ENCODE measurements at regions of chr14 and their contacts with region 1.

Region 1: GRCh38 chr14:75487155-75487671 is 35.1 kb upstream of the BATF start:
- DNase-seq: peak; percentile 35
- H3K4me3 Mint-ChIP-seq: no peak overlapping the region
- H3K27ac Mint-ChIP-seq: no peak overlapping the region
- H3K4me1 Mint-ChIP-seq: peaks cover 22% of the 10 kb centered on the region
- H3K27me3 Mint-ChIP-seq: peaks cover 3% of the 10 kb centered on the region

Region 2: DNA sequence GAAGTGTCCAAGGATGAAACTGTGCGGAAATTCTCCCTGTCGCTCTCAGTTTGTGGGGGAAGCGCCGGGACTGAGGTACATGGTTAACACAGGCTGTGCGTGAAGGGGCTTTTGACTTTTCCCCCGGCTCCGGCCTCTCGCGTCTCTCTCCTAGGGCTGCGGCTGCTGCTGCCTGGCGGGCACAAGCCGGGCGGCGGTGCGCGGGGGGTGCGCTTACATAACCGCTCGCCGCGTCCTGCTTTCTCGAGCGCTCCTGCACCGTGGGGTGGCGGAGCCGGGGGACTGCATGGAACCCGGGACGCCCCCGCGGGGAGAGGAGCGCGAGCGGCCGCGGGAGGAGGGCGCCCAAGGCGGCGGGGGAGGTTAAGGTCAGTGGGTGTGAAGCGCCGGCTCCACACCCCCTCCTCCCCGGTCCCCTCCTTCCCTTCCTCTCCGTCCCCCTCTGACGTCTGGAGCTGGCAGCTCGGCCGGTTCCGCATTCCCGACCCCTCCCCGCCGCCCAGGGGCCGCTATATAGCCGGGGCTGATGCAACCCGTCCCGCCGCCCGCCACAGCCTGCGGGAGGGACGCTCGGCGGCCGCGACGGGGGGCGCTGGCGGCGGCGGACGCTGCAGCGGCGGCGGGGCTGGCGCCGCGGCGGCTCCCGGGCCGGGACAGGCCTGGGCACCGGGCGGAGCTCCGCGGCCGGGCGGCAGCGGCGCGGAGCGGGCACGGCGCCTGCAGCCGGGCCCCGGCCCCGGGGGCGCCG is 59.6 kb before region 1 on chr14 and contains the start of gene JDP2:
- CTCF ChIA-PET with region 1: interaction called, 6 read pairs
- intact Hi-C with region 1: loop called (anchors 5 kb)
- DNase-seq: peak; percentile 53
- H3K4me3 Mint-ChIP-seq: peak within 1 kb of the TSS; percentile 73
- H3K27ac Mint-ChIP-seq: no peak within 1 kb of the TSS
- H3K4me1 Mint-ChIP-seq: peaks cover 17% of the 10 kb centered on the region
- H3K27me3 Mint-ChIP-seq: peaks cover 15% of the 10 kb centered on the region
- total RNA-seq, gene JDP2: 2.8 to 3.2 TPM

Region 3: GRCh38 chr14:75452900-75453747 is 34.1 kb before region 1 on chr14:
- CTCF ChIA-PET with region 1: interaction called, 10 read pairs
- intact Hi-C with region 1: no loop called
- DNase-seq: no peak
- H3K4me3 Mint-ChIP-seq: no peak overlapping the region
- H3K27ac Mint-ChIP-seq: no peak overlapping the region
- H3K4me1 Mint-ChIP-seq: peaks cover 2% of the 10 kb centered on the region
- H3K27me3 Mint-ChIP-seq: no peaks in the 10 kb centered on the region

Region 4: DNA sequence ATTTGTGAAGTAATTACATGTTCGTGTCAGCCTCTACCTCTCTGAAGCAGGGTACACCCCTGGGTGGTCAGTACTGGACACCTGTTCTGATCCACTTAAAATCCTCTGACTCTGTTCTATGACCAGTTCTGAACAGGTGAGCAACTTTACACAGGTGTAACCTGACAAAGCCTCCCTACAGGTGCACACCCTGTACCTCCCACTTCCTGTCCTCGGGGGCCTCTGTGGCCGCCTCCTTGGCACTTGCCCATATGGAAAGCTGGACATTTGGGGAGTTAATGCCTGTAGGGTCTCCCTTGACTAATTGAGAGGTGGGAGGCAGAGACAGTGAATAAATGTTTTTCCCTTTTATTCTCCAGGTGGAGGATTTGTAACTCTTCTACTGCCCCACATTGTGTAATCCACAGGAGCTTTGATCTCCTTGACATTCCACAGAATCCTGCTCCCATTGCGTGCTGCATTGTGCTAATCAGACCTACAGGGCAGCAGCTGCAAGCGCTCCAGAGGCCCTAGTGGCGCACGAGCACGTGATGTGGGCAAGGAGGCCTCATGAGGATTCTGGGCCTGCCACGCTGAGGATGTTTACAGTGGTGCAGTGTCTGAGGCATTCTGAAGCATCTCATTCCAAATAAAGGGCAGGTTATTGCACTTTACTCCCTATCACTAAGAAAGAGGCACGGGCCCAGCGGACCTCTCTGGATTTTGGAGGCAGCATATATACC is 10.8 kb before region 1 on chr14:
- CTCF ChIA-PET with region 1: interaction called, 12 read pairs
- intact Hi-C with region 1: no loop called
- DNase-seq: no peak
- H3K4me3 Mint-ChIP-seq: no peak overlapping the region
- H3K27ac Mint-ChIP-seq: no peak overlapping the region
- H3K4me1 Mint-ChIP-seq: no peaks in the 10 kb centered on the region
- H3K27me3 Mint-ChIP-seq: peaks cover 3% of the 10 kb centered on the region

Region 5: GRCh38 chr14:75522224-75522982 is 35.2 kb after region 1 on chr14 and contains the start of gene BATF:
- CTCF ChIA-PET with region 1: interaction called, 27 read pairs
- intact Hi-C with region 1: no loop called
- DNase-seq: peak; percentile 91
- H3K4me3 Mint-ChIP-seq: peak within 1 kb of the TSS; percentile 99
- H3K27ac Mint-ChIP-seq: peak within 1 kb of the TSS; percentile 100
- H3K4me1 Mint-ChIP-seq: peaks cover 61% of the 10 kb centered on the region
- H3K27me3 Mint-ChIP-seq: no peaks in the 10 kb centered on the region
- total RNA-seq, gene BATF: 178 to 179 TPM

Region 6: GRCh38 chr14:75542588-75543091 is 55.4 kb after region 1 on chr14:
- CTCF ChIA-PET with region 1: interaction called, 13 read pairs
- intact Hi-C with region 1: no loop called
- DNase-seq: peak; percentile 97
- H3K4me3 Mint-ChIP-seq: peak overlapping the region; percentile 65
- H3K27ac Mint-ChIP-seq: peak overlapping the region; percentile 99
- H3K4me1 Mint-ChIP-seq: peaks cover 84% of the 10 kb centered on the region
- H3K27me3 Mint-ChIP-seq: no peaks in the 10 kb centered on the region

Region 7: DNA sequence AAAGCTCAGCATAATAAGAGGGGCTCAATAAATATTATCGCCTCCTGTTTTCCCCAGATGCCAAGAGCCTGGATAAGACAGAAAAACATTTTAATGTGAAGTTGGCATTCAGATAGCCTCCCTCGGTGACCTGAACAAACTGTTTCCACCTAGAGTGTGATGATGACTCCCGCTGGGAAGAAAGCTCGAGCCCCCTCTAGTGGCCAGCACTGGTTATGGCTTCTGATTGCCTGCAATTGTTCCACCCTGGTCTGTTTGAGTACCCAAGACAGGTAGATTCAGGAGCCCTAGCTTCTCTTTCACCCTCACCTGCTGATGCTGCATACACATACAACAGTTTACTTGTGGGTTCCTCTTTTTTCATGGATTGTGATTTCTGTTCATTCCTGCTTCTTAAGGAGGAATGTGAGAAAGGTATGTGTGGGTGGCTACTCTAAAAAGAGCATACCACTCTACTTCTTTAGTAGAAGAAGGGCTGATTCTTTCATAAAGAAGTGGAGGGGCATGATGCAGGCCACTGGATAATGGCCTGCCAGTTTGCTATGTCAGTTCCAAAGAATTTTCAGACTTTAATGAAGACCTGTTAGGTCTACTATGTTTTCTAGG is 167.0 kb after region 1 on chr14:
- CTCF ChIA-PET with region 1: interaction called, 17 read pairs
- intact Hi-C with region 1: no loop called
- DNase-seq: peak; percentile 93
- H3K4me3 Mint-ChIP-seq: no peak overlapping the region
- H3K27ac Mint-ChIP-seq: no peak overlapping the region
- H3K4me1 Mint-ChIP-seq: peaks cover 6% of the 10 kb centered on the region
- H3K27me3 Mint-ChIP-seq: no peaks in the 10 kb centered on the region

Measured in activated naive CD4-positive, alpha-beta T cell treated with anti-CD3 and anti-CD28 coated beads for 36 hours (primary cell).